Activated CD4-positive, alpha-beta T cell treated with anti-CD3 and anti-CD28 coated beads, Interleukin-2, amount 10 ng/mL, durations not matched to agents 24 days and 14 days (primary cell): ENCODE measurements at regions of chr14 and their contacts with region 1.

Region 1: GRCh38 chr14:68663385-68664076 is 129.3 kb downstream of the ZFP36L1 start:
- DNase-seq: peak; percentile 77
- H3K4me3 Mint-ChIP-seq: peak overlapping the region; percentile 55
- H3K27ac Mint-ChIP-seq: peak overlapping the region; percentile 59
- H3K4me1 Mint-ChIP-seq: peaks cover 36% of the 10 kb centered on the region
- H3K27me3 Mint-ChIP-seq: peaks cover 4% of the 10 kb centered on the region

Region 2: DNA sequence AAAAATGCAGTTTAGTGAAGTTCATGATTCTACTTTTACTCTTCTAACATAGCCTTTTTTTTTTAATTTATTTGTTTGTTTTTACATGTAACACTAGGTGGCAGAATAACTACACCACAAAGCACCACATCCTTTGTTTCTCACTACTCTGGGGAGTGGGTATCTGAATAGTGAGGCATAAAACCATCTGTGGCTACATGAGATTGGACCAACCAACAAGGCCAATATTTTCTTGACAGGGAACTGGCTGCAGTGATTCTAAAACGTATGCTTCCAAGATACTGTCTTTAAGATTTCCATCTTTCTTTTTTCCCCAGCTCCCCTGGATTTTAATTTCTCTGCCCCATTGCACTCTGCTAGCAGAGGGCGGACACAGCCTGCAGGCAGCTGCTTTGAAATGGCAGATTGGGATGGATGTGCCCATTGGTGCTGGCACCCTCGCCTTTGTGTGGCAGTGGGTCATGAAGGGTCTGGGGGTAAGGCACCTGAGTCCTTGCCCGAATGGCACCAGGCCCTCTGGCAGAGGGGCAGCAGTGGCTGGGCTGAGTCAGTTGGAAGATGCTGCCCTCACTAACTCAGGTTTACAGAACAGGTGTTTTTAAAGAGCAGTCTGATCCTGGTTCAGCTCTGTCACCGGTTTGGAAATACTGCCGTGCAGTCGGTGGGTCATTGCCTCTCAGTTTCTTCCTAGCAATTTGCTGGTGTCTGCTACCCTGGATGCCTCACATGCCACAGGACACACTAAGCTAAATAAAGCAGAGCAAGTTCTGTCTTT is 414.9 kb before region 1 on chr14:
- intact Hi-C with region 1: loop called (anchors 1 kb)
- DNase-seq: peak; percentile 73
- H3K4me3 Mint-ChIP-seq: no peak overlapping the region
- H3K27ac Mint-ChIP-seq: no peak overlapping the region
- H3K4me1 Mint-ChIP-seq: peaks cover 29% of the 10 kb centered on the region
- H3K27me3 Mint-ChIP-seq: no peaks in the 10 kb centered on the region

Region 3: DNA sequence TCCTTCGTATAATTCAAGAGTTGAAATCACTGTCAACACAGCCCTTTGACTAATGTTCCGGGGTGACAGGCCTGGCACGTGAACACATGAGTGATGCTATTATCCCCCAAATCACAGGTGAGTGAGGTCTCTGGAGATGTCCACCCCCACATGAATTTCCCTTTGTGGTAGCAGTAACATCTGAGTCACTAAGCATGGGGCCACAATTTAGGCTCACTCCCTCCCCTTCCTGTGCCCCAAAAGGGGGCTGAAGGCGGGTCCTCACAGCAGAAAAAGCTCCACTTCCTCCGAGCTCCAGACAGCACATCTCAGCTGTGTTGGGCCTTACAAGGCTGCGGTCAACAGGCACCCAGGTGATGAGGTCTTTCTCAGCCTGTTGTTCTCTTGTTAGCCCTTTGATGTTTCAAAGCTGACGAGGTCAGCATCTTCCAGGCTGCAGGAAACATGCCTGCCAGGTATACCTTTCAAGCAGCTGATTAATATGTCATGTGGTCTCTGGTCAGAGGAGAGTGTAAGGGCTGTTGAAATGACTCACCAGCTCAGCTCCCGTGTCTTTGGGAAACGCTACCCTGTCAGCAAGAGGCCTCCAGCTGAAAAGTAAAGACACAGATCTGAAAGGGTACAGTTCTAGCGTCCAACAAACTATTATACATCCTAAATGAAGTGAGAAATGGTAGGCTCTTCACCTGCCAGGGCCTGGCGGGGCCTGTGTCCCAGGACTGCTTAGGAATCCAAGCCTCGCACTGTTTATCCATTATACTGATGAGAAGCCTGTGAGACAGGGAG is 22.1 kb after region 1 on chr14:
- intact Hi-C with region 1: loop called (anchors 1 kb)
- DNase-seq: peak; percentile 92
- H3K4me3 Mint-ChIP-seq: peak overlapping the region; percentile 61
- H3K27ac Mint-ChIP-seq: peak overlapping the region; percentile 91
- H3K4me1 Mint-ChIP-seq: peaks cover 56% of the 10 kb centered on the region
- H3K27me3 Mint-ChIP-seq: no peaks in the 10 kb centered on the region

Region 4: GRCh38 chr14:68718023-68718995 is 54.8 kb after region 1 on chr14:
- intact Hi-C with region 1: loop called (anchors 1 kb)
- DNase-seq: no peak
- H3K4me3 Mint-ChIP-seq: no peak overlapping the region
- H3K27ac Mint-ChIP-seq: no peak overlapping the region
- H3K4me1 Mint-ChIP-seq: peaks cover 46% of the 10 kb centered on the region
- H3K27me3 Mint-ChIP-seq: peaks cover 2% of the 10 kb centered on the region

Region 5: DNA sequence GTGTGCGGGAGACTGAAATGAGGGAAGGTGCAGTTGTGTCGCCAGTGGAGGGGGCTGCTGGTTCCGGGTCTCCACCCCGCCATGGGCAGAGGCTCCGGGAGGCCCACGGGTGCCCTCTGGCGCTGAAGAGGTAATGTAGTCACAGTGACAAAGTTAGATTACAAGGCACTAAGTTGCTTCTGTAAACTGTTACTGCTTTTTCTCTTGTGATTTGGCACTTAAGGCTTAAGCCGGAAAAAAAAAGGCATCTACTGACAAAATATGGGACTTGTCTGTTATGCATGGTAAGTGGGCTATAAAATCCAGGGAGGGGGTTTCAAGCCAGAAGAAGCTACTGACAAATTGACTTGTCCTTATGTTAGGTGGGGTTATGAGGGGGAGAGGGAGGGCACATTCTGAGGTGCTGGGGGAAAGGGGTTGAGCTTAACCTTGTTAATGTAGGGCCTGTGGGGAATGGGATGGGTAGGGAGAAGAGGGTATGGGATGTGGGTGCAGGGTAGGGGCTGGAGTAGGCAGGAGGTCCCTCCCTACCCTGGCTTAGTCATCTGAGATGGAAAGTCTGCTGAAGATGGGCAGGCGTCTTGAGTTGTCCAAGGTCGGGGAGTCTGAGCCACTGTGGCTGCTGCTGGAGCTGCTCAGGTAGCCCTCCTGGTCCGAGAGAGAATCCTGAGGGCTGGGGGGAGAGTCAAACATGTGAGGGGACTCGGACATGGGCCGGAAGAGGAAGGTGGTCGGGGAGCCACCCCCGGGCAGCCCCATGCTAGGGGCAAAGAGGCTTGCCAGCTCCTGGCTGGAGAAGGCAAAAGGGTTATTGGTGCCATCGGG is 125.7 kb after region 1 on chr14:
- intact Hi-C with region 1: loop called (anchors 1 kb)
- DNase-seq: peak; percentile 95
- H3K4me3 Mint-ChIP-seq: peak overlapping the region; percentile 93
- H3K27ac Mint-ChIP-seq: peak overlapping the region; percentile 100
- H3K4me1 Mint-ChIP-seq: peaks cover 68% of the 10 kb centered on the region
- H3K27me3 Mint-ChIP-seq: no peaks in the 10 kb centered on the region